Gastrocnemius medialis (tissue), 4 donors: ENCODE measurements at regions of chr12 and their contacts with region 1.

Region 1: GRCh38 chr12:29519585-29520182 is 22.2 kb upstream of the OVCH1 start:
- DNase-seq: no peak
- ATAC-seq: no peak
- H3K4me3 ChIP-seq: no peak overlapping the region
- H3K27ac ChIP-seq: no peak overlapping the region
- H3K4me1 ChIP-seq: peaks cover 0 to 8% of the 10 kb centered on the region in 2 donors
- H3K27me3 ChIP-seq: no peaks in the 10 kb centered on the region
- CTCF ChIP-seq: peak; percentile 51 to 64 (median 61)
- POLR2A ChIP-seq: no peak

Region 2: GRCh38 chr12:29581631-29582030 is 61.9 kb after region 1 on chr12:
- in situ Hi-C with region 1: no loop called
- intact Hi-C with region 1: no loop called
- DNase-seq: no peak
- ATAC-seq: no peak
- H3K4me3 ChIP-seq: no peak overlapping the region
- H3K27ac ChIP-seq: peak overlapping the region; percentile 2 to 71 (median 60)
- H3K4me1 ChIP-seq: peaks cover 21 to 49% of the 10 kb centered on the region in 2 donors
- H3K27me3 ChIP-seq: no peaks in the 10 kb centered on the region
- CTCF ChIP-seq: no peak
- POLR2A ChIP-seq: no peak

Region 3: DNA sequence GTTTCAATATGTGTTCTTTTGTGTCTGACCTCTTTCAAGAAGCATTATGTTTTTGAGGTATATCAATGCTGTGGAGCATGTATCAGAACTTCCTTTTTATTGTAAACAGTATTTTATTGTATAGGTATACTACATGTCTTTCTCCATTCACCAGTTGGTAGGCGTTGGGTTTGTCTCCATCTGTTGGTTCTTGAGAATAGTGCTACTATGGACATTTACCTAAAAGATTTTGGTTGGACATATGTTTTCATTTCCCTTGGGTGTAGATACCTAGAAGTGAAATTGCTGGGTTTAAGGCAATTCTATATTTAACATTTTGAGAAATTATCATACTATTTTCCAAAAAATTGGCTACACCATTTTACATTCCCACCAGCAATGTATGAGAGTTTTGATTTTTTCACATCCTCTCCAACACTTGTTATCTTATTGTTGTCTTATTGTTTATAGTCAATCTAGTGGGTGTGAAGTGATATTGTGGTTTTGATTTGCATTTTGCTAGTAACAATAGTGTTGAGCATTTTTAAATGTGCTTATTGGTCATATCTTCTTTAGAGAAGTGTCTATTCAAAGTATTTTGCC is 766.8 kb after region 1 on chr12:
- in situ Hi-C with region 1: loop called in 1 of 4 experiments (anchors 25 kb)
- intact Hi-C with region 1: loop called (anchors 10 kb)
- DNase-seq: no peak
- ATAC-seq: no peak
- H3K4me3 ChIP-seq: no peak overlapping the region
- H3K27ac ChIP-seq: no peak overlapping the region
- H3K4me1 ChIP-seq: no peaks in the 10 kb centered on the region
- H3K27me3 ChIP-seq: no peaks in the 10 kb centered on the region
- CTCF ChIP-seq: peak in 2 of 5 experiments; percentile 21 to 39
- POLR2A ChIP-seq: no peak